Esophagus squamous epithelium (tissue), 5 donors: ENCODE measurements at regions of chr3 and their contacts with region 1.

Region 1: DNA sequence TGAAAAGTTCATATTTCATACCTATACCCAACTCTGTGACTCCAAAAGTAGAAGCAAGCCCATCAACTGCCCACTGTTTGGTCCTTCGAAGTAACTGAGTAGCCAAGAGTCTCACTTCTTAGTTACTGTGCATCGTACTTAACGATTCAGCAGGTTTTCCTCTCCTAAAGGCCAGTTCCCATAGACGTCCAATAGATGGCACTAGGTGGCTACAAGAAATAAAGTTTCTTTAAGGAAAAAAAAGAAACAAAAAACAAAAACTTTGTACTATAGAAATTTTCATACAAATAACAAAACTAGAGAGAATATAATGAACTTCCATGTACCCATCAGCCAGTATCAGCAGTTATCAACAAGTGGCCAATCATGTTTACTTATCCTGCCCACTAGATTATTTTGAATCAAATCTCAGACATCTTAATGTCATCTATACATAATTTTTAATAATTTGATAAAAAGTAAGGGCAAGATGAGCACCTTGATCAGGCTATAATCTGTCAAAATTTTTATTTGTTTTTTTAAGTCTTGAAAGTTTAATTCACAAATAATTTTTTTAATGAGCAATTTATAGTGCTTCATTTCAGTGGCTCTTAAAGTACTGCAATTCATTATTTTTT is 63.8 kb upstream of the ACP3 start:
- DNase-seq: no peak
- H3K4me3 ChIP-seq: no peak overlapping the region
- H3K27ac ChIP-seq: no peak overlapping the region
- H3K4me1 ChIP-seq: peaks cover 0 to 9% (median 0%) of the 10 kb centered on the region in 3 donors
- H3K27me3 ChIP-seq: peaks cover 0 to 7% (median 0%) of the 10 kb centered on the region in 4 donors
- CTCF ChIP-seq: peak; percentile 29 to 77 (median 64)
- POLR2A ChIP-seq: no peak

Region 2: GRCh38 chr3:132294906-132295305 is 41.5 kb after region 1 on chr3:
- intact Hi-C with region 1: no loop called
- DNase-seq: no peak
- H3K4me3 ChIP-seq: no peak overlapping the region
- H3K27ac ChIP-seq: no peak overlapping the region
- H3K4me1 ChIP-seq: no peaks in the 10 kb centered on the region
- H3K27me3 ChIP-seq: no peaks in the 10 kb centered on the region
- CTCF ChIP-seq: no peak
- POLR2A ChIP-seq: no peak

Region 3: GRCh38 chr3:132343018-132343612 is 89.7 kb after region 1 on chr3:
- intact Hi-C with region 1: loop called (anchors 5 kb)
- DNase-seq: no peak
- H3K4me3 ChIP-seq: no peak overlapping the region
- H3K27ac ChIP-seq: peak overlapping the region in 1 of 4 donors; percentile 22
- H3K4me1 ChIP-seq: peaks cover 4 to 53% (median 6%) of the 10 kb centered on the region in 3 donors
- H3K27me3 ChIP-seq: no peaks in the 10 kb centered on the region
- CTCF ChIP-seq: peak; percentile 29 to 88 (median 84)
- POLR2A ChIP-seq: no peak